Activated naive CD4-positive, alpha-beta T cell treated with anti-CD3 and anti-CD28 coated beads, Interleukin-2, amount 10 ng/mL, durations not matched to agents 7 days and 5 days (primary cell): ENCODE measurements at regions of chr17 and their contacts with region 1.

Region 1: DNA sequence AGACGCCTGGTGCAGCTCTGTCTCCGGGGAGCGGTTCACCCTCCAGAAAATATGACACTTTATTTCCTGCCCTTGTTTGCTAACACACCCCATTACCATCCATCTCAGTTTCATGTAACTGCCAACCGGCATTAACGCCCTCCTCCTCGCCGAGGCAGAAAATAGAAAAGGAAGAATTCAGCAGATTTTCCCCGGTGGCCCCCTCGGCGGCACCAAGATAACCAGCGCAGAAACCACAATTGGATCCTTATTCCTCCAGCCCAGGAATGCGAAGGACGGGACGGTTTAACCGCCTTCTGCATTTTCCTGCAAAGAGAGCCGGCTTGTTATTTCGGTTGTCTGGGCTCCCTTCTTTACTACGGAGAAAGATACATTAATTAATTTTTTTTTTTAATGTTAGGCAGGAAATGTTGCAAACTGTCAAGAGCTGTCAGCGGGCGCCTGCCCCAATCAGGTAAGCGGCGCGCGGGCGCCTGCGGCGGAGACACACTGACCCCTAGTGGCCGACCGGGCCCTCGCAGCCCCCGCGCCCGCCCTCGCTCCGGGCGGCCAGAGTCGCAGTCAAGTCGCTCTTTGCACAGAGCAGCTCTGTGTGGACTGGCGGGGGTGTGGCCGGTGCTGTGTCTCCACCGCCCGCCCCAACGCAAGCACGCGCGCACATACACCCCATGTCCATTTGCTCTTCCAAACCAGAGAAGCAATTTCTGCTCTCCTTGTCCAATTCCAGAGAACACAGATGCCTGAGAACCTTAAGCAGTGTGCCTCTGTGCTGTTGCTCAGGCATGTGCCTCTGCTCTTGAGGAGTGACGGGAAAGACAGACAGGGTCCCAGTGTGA is 53.6 kb downstream of the C17orf67 start:
- DNase-seq: peak; percentile 89
- H3K4me3 Mint-ChIP-seq: peak overlapping the region; percentile 87
- H3K27ac Mint-ChIP-seq: peak overlapping the region; percentile 98
- H3K4me1 Mint-ChIP-seq: peaks cover 30% of the 10 kb centered on the region
- H3K27me3 Mint-ChIP-seq: peaks cover 9% of the 10 kb centered on the region

Region 2: DNA sequence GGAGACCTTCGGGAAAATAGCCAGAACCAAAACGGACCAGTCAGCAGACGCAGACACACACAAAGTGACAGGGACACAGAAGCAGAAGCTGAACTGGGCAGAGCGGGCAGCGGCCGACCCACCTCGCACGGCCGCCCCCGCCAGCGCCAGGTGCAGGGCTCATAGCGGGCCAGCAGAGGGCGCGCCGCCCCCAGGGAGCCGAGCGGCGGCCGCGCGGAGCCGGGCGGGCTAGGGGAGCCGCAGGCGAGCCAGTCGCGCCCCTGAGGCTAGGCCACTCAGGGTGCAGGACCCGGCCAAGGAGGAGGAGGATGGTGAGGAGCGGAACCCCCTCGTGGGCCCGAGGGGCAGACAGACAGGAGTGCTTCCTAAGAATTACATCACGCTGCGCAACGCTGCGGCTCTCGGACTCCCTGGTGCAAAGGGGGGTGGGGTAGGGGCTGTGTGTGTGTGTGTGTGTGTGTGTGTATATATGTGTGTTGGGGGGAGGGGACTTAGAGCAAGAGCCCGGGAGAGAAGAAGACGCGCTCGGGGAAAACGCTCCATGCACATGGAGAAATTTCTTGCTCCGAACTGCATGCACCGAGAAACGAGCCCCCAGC is 187.5 kb before region 1 on chr17:
- CTCF ChIA-PET with region 1: interaction called, 26 read pairs
- DNase-seq: peak; percentile 69
- H3K4me3 Mint-ChIP-seq: peak overlapping the region; percentile 69
- H3K27ac Mint-ChIP-seq: no peak overlapping the region
- H3K4me1 Mint-ChIP-seq: peaks cover 32% of the 10 kb centered on the region
- H3K27me3 Mint-ChIP-seq: peaks cover 87% of the 10 kb centered on the region

Region 3: DNA sequence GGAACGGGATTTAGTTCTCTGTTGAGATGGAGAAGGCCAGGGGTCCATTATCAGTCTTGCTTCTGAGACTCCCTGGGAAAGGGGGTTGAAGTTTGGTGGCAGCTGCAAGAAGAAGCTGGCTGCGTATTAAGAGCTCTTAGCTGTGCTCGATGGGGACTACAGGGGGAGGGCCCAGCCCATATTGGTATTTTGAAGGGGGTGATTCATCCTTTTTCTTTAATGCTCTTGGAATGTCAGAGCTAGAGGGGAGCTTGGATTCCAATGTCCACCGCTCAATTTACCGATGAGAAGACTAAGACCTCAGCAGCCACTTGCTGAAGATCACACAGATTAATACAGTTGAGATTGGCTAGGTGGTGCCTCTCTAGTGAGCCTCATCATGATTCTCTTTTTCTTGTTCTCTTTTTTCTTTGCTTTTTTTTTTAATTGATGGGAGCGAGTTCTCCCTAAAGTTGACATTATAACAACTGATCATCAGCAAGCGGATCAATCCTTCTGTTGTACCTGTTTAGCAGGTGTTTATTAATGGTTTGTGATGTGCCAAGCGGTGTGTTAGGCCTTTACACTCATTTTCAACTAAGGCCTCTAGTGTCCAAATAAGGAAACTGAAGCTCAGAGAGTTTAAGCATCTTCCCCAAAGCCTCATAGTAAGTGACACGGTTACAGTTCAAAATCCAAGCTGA is 181.5 kb before region 1 on chr17:
- CTCF ChIA-PET with region 1: interaction called, 26 read pairs
- DNase-seq: no peak
- H3K4me3 Mint-ChIP-seq: peak overlapping the region; percentile 12
- H3K27ac Mint-ChIP-seq: peak overlapping the region; percentile 83
- H3K4me1 Mint-ChIP-seq: peaks cover 81% of the 10 kb centered on the region
- H3K27me3 Mint-ChIP-seq: peaks cover 48% of the 10 kb centered on the region

Region 4: DNA sequence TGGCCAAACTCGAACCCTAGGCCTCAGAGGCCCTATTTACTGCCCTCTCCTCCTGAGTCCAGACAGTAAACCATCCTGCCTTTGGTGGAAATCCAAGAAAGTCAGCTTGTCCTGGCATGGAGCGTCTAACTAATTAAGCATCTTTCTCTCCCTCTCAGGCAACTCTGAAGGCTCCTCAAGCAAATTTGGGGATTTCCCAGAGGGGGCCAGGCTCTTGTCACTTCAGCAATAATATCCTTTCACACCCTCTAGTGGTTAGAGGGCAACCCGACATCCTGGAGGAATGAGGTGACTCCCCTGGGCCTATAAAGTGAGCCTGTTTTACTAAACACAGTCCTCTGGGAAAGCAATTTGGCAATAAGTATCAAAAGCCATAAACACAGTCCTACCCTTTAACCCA is 126.2 kb before region 1 on chr17:
- CTCF ChIA-PET with region 1: interaction called, 10 read pairs
- DNase-seq: peak; percentile 80
- H3K4me3 Mint-ChIP-seq: no peak overlapping the region
- H3K27ac Mint-ChIP-seq: no peak overlapping the region
- H3K4me1 Mint-ChIP-seq: peaks cover 4% of the 10 kb centered on the region
- H3K27me3 Mint-ChIP-seq: peaks cover 20% of the 10 kb centered on the region

Region 5: GRCh38 chr17:56762988-56763387 is 17.1 kb before region 1 on chr17:
- CTCF ChIA-PET with region 1: interaction called, 10 read pairs
- DNase-seq: peak; percentile 31
- H3K4me3 Mint-ChIP-seq: peak overlapping the region; percentile 17
- H3K27ac Mint-ChIP-seq: peak overlapping the region; percentile 84
- H3K4me1 Mint-ChIP-seq: peaks cover 30% of the 10 kb centered on the region
- H3K27me3 Mint-ChIP-seq: peaks cover 13% of the 10 kb centered on the region

Region 6: GRCh38 chr17:56887550-56888467 is 107.7 kb after region 1 on chr17:
- CTCF ChIA-PET with region 1: no interaction called
- DNase-seq: no peak
- H3K4me3 Mint-ChIP-seq: no peak overlapping the region
- H3K27ac Mint-ChIP-seq: no peak overlapping the region
- H3K4me1 Mint-ChIP-seq: no peaks in the 10 kb centered on the region
- H3K27me3 Mint-ChIP-seq: no peaks in the 10 kb centered on the region

Region 7: DNA sequence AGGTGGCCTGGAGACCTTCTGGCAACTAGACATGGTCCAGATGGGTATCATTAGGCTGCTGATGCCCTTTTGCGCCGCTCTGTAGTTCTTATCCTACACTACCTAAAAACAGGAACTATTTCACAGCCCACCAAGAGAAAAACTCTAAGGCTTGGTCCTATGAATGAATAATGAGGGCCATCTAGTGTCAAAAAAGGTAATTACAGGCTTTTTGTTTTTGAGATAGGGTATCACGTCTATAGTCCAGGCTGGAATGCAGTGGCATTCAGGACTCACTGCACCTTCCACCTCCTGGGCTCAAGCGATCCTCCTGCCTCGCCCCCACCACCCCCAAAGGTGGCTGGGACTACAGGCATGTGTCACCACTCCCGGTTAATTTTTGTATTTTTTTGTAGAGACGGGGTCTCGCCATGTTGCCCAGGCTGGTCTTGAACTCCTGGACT is 159.8 kb after region 1 on chr17:
- CTCF ChIA-PET with region 1: interaction called, 10 read pairs
- DNase-seq: no peak
- H3K4me3 Mint-ChIP-seq: no peak overlapping the region
- H3K27ac Mint-ChIP-seq: no peak overlapping the region
- H3K4me1 Mint-ChIP-seq: peaks cover 11% of the 10 kb centered on the region
- H3K27me3 Mint-ChIP-seq: no peaks in the 10 kb centered on the region